ENCODE measurements at regions of chr7 and their contacts with region 1.

Region 1: DNA sequence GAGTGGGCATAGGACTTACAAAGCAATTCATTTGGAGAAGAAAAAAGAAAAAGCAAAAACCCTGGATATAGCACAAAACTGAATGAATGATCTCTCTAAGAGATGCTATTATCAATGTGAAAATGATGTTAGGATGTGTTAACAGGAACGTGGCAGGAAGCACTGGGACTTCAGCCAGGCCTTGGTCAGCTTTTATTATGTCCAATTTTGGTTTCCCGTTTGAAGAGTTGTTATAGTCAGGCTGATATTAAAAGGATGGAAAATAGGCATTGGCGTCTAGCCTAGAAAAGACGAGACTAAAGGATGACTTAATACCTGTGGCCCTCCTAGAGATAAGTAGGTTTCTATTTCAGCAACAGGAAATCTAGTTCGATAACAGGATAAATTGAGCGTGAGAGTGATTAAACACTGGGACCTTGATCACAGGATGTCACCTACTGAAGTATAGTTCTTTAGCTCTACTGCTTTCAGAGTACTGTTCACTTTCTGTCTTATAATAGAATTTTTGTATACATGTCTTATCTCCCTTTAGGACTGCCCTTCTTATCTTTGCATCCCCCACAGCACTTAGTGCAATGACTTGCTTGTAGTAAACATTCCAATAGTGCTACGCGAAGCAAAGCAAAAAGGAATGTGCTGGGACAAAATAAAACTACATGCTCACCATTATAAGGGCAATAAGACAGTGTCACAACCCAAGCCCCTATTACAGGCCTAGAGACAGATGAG is 99.8 kb upstream of the AGBL3 start:
- DNase-seq: no peak
- H3K4me3 ChIP-seq: no peak overlapping the region
- H3K27ac ChIP-seq: peak overlapping the region; percentile 62 to 63
- H3K4me1 ChIP-seq: peaks cover 0 to 6% of the 10 kb centered on the region in 2 donors
- H3K27me3 ChIP-seq: no peaks in the 10 kb centered on the region
- CTCF ChIP-seq: no peak
- POLR2A ChIP-seq: no peak

Region 2: DNA sequence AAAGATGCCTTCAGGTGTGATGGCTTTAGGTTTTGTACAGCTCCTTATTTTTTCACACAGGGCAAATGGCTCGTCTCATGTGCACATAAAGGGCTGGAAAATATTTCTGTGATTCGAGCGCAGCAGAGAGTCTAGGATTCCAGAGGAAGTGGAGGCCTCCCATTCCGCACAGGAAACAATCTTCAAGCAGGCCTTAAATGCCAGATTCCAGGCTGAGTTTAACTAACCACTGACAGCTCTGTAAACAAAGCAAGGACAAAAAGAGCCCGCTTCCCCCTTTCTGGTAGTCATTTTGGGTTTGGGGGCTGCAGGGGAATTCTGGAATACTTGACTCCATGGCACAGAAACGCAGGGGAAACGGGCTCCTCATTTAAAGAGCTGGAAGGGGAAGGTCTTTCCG is 19.9 kb before region 1 on chr7:
- intact Hi-C with region 1: no loop called
- DNase-seq: no peak
- H3K4me3 ChIP-seq: peak overlapping the region in 1 of 3 donors; percentile 17
- H3K27ac ChIP-seq: peak overlapping the region; percentile 51 to 73
- H3K4me1 ChIP-seq: no peaks in the 10 kb centered on the region
- H3K27me3 ChIP-seq: no peaks in the 10 kb centered on the region
- CTCF ChIP-seq: no peak
- POLR2A ChIP-seq: no peak

Region 3: DNA sequence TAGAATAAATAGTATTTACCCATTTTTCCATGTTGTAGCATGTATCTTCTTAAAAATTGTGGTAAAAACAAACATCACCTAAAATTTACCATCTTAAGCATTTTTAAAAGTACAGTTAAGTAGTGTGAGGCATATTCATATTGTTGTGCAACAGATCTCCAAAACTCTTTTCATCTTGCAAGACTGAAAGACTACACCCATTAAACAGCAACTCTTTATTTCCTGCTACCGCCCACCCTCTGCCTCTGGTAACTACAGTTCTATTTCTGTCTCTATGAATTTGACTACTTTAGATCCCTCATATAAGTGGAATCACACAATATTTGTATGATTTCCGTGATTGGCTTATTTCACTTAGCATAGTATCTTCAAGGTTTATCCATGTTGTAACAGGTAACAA is 59.7 kb after region 1 on chr7:
- intact Hi-C with region 1: loop called (anchors 5 kb)
- DNase-seq: no peak
- H3K4me3 ChIP-seq: no peak overlapping the region
- H3K27ac ChIP-seq: no peak overlapping the region
- H3K4me1 ChIP-seq: no peaks in the 10 kb centered on the region
- H3K27me3 ChIP-seq: no peaks in the 10 kb centered on the region
- CTCF ChIP-seq: no peak
- POLR2A ChIP-seq: no peak

Measured in breast epithelium (tissue), 4 donors.